Right lobe of liver (tissue), 6 donors: ENCODE measurements at regions of chr9 and their contacts with region 1.

Region 1: GRCh38 chr9:35559792-35560530 is 45.1 kb upstream of the TESK1 start:
- DNase-seq: no peak
- ATAC-seq: no peak
- H3K4me3 ChIP-seq: no peak overlapping the region
- H3K27ac ChIP-seq: no peak overlapping the region
- H3K4me1 ChIP-seq: no peaks in the 10 kb centered on the region
- H3K27me3 ChIP-seq: no peaks in the 10 kb centered on the region
- CTCF ChIP-seq: no peak
- POLR2A ChIP-seq: no peak

Region 2: GRCh38 chr9:35481347-35481975 is 78.5 kb before region 1 on chr9:
- intact Hi-C with region 1: loop called (anchors 5 kb)
- DNase-seq: peak in 2 of 3 donors; percentile 47 to 73
- ATAC-seq: peak; percentile 82 to 85 (median 84)
- H3K4me3 ChIP-seq: no peak overlapping the region
- H3K27ac ChIP-seq: no peak overlapping the region
- H3K4me1 ChIP-seq: no peaks in the 10 kb centered on the region
- H3K27me3 ChIP-seq: no peaks in the 10 kb centered on the region
- CTCF ChIP-seq: peak; percentile 68 to 87 (median 78)
- POLR2A ChIP-seq: no peak

Region 3: DNA sequence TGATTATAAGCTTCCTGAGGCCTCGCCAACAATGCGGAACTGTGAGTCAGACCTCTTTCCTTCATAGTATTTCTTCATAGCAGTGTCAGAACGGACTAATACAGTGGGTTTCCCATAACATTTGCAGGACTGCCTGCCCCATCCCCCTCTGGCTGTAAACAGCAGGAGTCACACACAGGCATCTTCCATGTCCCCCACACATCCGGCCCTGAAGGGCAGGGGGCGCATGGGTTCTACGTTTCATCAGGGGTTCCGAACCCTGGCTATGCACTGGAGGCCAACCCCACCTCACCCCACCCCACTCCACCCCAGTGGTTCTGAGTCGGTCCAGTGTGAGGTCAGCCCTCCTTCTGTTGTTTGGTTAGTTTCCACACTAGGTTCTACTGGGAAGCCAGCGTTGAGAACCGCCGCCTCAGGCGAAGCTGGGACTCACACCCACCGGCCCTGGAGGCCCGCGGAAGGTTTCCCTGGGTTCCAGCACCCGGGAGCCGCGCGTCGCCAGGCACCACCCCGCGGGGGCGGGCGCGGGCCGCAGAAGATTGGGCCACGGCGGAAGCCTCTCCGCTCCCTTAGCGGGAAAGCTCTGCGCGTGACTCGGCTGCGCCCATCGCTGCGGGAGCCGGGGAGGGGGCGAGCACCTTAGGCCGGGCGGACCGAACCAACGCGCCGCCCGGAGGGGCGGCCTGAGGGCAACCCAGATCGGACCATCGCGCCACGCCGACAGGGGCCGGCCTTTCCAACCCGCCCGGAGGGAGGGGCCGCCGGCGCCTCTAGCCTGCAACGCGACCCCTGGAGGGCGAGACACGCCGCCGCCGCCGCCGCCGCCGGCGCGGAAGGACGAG is 70.4 kb before region 1 on chr9 and contains the start of gene RUSC2:
- intact Hi-C with region 1: loop called (anchors 5 kb)
- DNase-seq: peak; percentile 85 to 88 (median 86)
- ATAC-seq: peak; percentile 81 to 92 (median 83)
- H3K4me3 ChIP-seq: peak within 1 kb of the TSS; percentile 67 to 86 (median 74)
- H3K27ac ChIP-seq: peak within 1 kb of the TSS; percentile 73 to 93 (median 90)
- H3K4me1 ChIP-seq: peaks cover 0 to 18% (median 4%) of the 10 kb centered on the region in 4 donors
- H3K27me3 ChIP-seq: no peaks in the 10 kb centered on the region
- CTCF ChIP-seq: peak; percentile 36 to 48 (median 42)
- POLR2A ChIP-seq: peak; percentile 91
- total RNA-seq, gene RUSC2: 6.0 to 12.9 (median 9.1) TPM